Gastrocnemius medialis (tissue), 4 donors: ENCODE measurements at regions of chr4 and their contacts with region 1.

Region 1: DNA sequence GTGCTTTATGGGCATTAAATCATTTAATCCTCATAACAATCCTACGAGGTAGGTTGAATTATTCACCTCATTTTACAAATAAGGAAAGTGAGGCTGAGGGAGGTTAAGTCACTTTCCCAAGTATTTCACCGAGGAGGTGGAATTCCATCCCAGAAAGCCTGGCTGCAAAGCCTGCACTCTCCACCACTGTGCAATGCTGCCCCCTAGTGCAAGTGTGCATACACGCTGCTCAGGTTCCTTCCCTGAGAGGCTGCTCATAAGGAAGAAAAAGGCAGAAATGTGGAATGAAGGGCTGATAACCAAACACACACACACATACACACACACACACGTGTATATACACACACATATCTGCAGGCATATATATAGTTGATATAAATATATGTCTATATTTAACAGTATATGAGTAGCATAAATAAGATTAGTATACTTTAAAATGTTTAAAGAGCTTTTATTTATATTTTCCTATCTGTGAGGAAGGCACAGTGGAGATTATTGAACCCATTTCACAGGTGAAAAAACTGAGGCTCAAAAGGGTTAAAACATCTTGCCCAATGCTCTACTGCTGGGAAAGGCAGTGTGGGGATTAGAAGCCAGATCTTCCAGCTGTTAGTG is 714.5 kb upstream of the TENM3 start:
- DNase-seq: peak; percentile 3 to 19
- ATAC-seq: peak in 1 of 2 donors; percentile 58
- H3K4me3 ChIP-seq: no peak overlapping the region
- H3K27ac ChIP-seq: no peak overlapping the region
- H3K4me1 ChIP-seq: no peaks in the 10 kb centered on the region
- H3K27me3 ChIP-seq: no peaks in the 10 kb centered on the region
- CTCF ChIP-seq: peak; percentile 48 to 77 (median 60)
- POLR2A ChIP-seq: no peak

Region 2: DNA sequence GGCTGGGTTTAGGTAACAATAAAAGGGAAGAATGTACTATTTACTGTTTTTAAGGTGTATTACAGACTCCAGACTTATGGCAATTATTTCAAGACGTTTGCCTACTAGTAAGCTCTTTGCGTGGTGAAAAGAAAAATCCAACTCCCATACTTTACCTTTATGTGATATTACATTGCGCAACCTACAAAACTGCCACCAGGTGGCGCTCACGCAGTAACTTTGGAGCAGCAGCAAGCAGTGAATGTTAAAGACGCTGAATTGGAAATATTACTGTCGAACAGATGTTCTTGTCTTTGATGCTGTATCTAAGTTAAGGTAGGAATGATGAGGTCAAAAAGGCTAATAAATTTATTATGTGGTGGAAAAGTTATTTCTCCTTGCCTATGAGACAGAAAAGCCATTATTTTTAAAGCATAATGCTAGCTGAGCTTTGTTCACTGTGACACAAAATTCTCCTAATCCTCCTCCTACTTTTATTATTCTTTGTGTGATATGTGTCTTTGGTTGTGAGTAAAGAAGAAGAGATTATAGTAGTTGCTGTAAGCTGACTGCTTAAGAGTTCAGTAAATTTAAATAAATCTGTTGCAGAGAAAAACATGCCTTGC is 385.3 kb before region 1 on chr4:
- in situ Hi-C with region 1: loop called (anchors 5 to 25 kb)
- intact Hi-C with region 1: loop called (anchors 1 kb)
- DNase-seq: peak; percentile 19 to 54
- ATAC-seq: peak in 1 of 2 donors; percentile 62
- H3K4me3 ChIP-seq: no peak overlapping the region
- H3K27ac ChIP-seq: no peak overlapping the region
- H3K4me1 ChIP-seq: no peaks in the 10 kb centered on the region
- H3K27me3 ChIP-seq: no peaks in the 10 kb centered on the region
- CTCF ChIP-seq: peak; percentile 66 to 86 (median 72)
- POLR2A ChIP-seq: no peak

Region 3: GRCh38 chr4:181289198-181289597 is 239.5 kb before region 1 on chr4:
- in situ Hi-C with region 1: loop called in 1 of 4 experiments (anchors 25 kb)
- intact Hi-C with region 1: no loop called
- DNase-seq: no peak
- ATAC-seq: no peak
- H3K4me3 ChIP-seq: no peak overlapping the region
- H3K27ac ChIP-seq: no peak overlapping the region
- H3K4me1 ChIP-seq: peaks cover 0 to 9% of the 10 kb centered on the region in 2 donors
- H3K27me3 ChIP-seq: no peaks in the 10 kb centered on the region
- CTCF ChIP-seq: no peak
- POLR2A ChIP-seq: no peak

Region 4: DNA sequence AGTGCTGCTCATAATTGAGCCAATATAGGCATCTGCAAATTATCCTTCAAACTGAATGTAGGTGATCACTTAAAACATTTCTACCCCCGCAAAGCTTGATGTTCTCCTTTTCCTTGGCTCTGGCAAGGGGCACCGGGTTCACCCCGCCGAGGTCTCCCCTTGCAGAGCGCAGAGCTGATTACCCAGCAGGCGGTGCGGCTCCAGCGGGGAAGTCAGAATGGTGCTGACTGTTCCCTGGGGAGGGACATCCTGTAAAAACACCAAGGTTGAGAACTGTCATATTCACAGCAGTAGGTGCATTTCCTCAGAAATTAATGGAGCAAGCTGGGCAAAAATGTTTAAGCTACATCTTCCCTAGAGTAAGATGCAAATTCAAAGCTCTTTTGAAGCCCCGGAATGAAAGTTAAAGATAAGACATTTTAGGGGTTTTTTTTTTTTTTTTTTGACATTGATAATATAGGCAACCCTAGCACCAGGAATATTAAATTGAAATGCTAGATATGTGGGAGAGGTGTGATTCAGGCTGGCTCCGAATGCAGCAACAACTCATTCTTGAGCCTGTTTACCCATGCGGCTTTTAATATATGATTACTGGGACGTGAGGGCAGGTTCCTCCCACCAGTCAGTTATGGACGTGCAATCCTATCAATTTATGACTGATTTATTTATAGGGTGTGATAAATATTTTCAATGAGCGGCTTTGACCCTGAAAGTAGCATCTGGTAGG is 52.7 kb before region 1 on chr4:
- in situ Hi-C with region 1: no loop called
- intact Hi-C with region 1: no loop called
- DNase-seq: no peak
- ATAC-seq: no peak
- H3K4me3 ChIP-seq: no peak overlapping the region
- H3K27ac ChIP-seq: no peak overlapping the region
- H3K4me1 ChIP-seq: no peaks in the 10 kb centered on the region
- H3K27me3 ChIP-seq: no peaks in the 10 kb centered on the region
- CTCF ChIP-seq: no peak
- POLR2A ChIP-seq: no peak

Region 5: DNA sequence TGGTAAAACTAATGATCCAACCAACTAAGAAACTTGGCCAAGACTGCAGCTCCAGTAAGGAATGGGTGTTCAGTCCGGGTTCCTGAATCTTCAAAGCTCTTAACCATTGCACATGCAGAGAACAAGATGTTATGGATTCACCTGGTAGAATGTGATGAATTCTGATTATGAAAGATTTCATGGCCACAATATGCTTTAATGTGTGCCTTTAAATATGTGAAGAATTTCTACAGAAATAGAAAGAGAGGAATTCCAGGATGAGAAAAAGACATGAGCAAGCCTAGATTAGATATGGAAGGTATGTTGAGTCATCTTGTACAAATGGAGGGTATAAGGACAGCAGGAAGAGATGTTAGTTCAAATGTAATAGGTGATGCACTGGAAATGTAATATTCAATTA is 242.3 kb after region 1 on chr4:
- in situ Hi-C with region 1: no loop called
- intact Hi-C with region 1: no loop called
- DNase-seq: no peak
- ATAC-seq: no peak
- H3K4me3 ChIP-seq: no peak overlapping the region
- H3K27ac ChIP-seq: no peak overlapping the region
- H3K4me1 ChIP-seq: no peaks in the 10 kb centered on the region
- H3K27me3 ChIP-seq: no peaks in the 10 kb centered on the region
- CTCF ChIP-seq: no peak
- POLR2A ChIP-seq: no peak